Ovary (tissue), 10 donors: ENCODE measurements at regions of chr20 and their contacts with region 1.

Region 1: GRCh38 chr20:36861875-36862801 is 13.8 kb upstream of the TLDC2 start:
- DNase-seq: peak; percentile 86 to 91 (median 87)
- H3K4me3 ChIP-seq: peak overlapping the region; percentile 46
- H3K27ac ChIP-seq: peak overlapping the region; percentile 89 to 95
- H3K4me1 ChIP-seq: peaks cover 20% of the 10 kb centered on the region
- H3K27me3 ChIP-seq: no peaks in the 10 kb centered on the region
- CTCF ChIP-seq: no peak
- EP300 ChIP-seq: no peak
- POLR2A ChIP-seq: peak; percentile 80

Region 2: GRCh38 chr20:36613974-36614373 is 248.2 kb before region 1 on chr20:
- intact Hi-C with region 1: loop called in 1 of 4 experiments (anchors 10 kb)
- DNase-seq: no peak
- H3K4me3 ChIP-seq: no peak overlapping the region
- H3K27ac ChIP-seq: no peak overlapping the region
- H3K4me1 ChIP-seq: no peaks in the 10 kb centered on the region
- H3K27me3 ChIP-seq: no peaks in the 10 kb centered on the region
- CTCF ChIP-seq: no peak
- EP300 ChIP-seq: no peak
- POLR2A ChIP-seq: no peak

Region 3: GRCh38 chr20:36745927-36746659 is 116.0 kb before region 1 on chr20 and contains the start of gene NDRG3:
- intact Hi-C with region 1: loop called in 1 of 4 experiments (anchors 5 kb)
- DNase-seq: peak; percentile 91 to 94 (median 92)
- H3K4me3 ChIP-seq: peak within 1 kb of the TSS; percentile 92
- H3K27ac ChIP-seq: peak within 1 kb of the TSS; percentile 68 to 70
- H3K4me1 ChIP-seq: peaks cover 2% of the 10 kb centered on the region
- H3K27me3 ChIP-seq: no peaks in the 10 kb centered on the region
- CTCF ChIP-seq: peak in 1 of 3 donors; percentile 18
- EP300 ChIP-seq: no peak
- POLR2A ChIP-seq: no peak
- total RNA-seq, gene NDRG3: 16.7 to 30.1 (median 24.1) TPM

Region 4: GRCh38 chr20:36773597-36774390 is 88.3 kb before region 1 on chr20 and contains the start of gene DSN1:
- intact Hi-C with region 1: loop called in 2 of 4 experiments (anchors 10 kb)
- DNase-seq: peak; percentile 95 to 100 (median 99)
- H3K4me3 ChIP-seq: peak within 1 kb of the TSS; percentile 80
- H3K27ac ChIP-seq: peak within 1 kb of the TSS; percentile 87 to 90
- H3K4me1 ChIP-seq: peaks cover 2% of the 10 kb centered on the region
- H3K27me3 ChIP-seq: no peaks in the 10 kb centered on the region
- CTCF ChIP-seq: peak in 1 of 3 donors; percentile 59
- EP300 ChIP-seq: no peak
- POLR2A ChIP-seq: peak; percentile 67
- total RNA-seq, gene DSN1: 3.3 to 7.0 (median 5.1) TPM

Region 5: GRCh38 chr20:36819659-36820058 is 42.5 kb before region 1 on chr20:
- intact Hi-C with region 1: loop called in 1 of 4 experiments (anchors 10 kb)
- DNase-seq: no peak
- H3K4me3 ChIP-seq: no peak overlapping the region
- H3K27ac ChIP-seq: peak overlapping the region in 1 of 2 donors; percentile 22
- H3K4me1 ChIP-seq: peaks cover 7% of the 10 kb centered on the region
- H3K27me3 ChIP-seq: no peaks in the 10 kb centered on the region
- CTCF ChIP-seq: no peak
- EP300 ChIP-seq: no peak
- POLR2A ChIP-seq: no peak

Region 6: DNA sequence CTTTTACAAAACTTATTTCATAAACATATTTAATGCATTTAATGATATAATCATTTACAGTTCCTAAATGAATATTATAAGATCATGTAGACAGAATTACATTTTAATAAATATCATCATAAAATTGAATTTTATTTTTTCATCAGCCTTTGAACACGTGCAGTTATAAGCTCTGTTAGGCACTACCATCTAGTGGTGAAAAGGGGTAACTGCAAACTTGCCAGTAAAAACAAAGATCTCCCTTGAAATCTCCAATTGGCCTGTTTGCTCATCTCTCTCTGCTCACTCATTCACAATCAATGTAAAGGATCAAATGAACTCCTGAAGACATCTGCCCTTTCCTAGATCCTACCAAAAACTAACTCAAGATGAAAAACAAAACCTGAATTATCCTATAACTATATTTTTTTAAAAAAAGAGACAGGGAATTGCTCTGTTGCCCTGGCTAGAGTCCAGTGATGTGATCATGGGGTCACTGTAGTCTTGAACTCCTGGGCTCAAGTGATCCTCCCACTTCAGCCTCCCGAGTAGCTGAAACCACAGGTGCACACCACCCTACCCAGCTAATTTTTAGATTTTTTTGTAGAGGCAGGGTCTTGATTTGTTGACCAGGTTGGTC is 57.7 kb after region 1 on chr20:
- intact Hi-C with region 1: no loop called
- DNase-seq: no peak
- H3K4me3 ChIP-seq: no peak overlapping the region
- H3K27ac ChIP-seq: no peak overlapping the region
- H3K4me1 ChIP-seq: no peaks in the 10 kb centered on the region
- H3K27me3 ChIP-seq: no peaks in the 10 kb centered on the region
- CTCF ChIP-seq: peak; percentile 71 to 83 (median 77)
- EP300 ChIP-seq: no peak
- POLR2A ChIP-seq: no peak